Esophagus squamous epithelium (tissue), 5 donors: ENCODE measurements at regions of chr11 and their contacts with region 1.

Region 1: GRCh38 chr11:46389450-46390253 is 1.9 kb downstream of the CHRM4 start:
- DNase-seq: no peak
- H3K4me3 ChIP-seq: peak overlapping the region; percentile 17 to 69 (median 39)
- H3K27ac ChIP-seq: no peak overlapping the region
- H3K4me1 ChIP-seq: peaks cover 30 to 51% (median 39%) of the 10 kb centered on the region in 3 donors
- H3K27me3 ChIP-seq: peaks cover 22 to 84% (median 22%) of the 10 kb centered on the region in 4 donors
- CTCF ChIP-seq: peak; percentile 62 to 83 (median 74)
- POLR2A ChIP-seq: no peak

Region 2: GRCh38 chr11:46450846-46451477 is 61.3 kb after region 1 on chr11:
- intact Hi-C with region 1: no loop called
- DNase-seq: no peak
- H3K4me3 ChIP-seq: no peak overlapping the region
- H3K27ac ChIP-seq: no peak overlapping the region
- H3K4me1 ChIP-seq: peaks cover 0 to 27% (median 9%) of the 10 kb centered on the region in 3 donors
- H3K27me3 ChIP-seq: no peaks in the 10 kb centered on the region
- CTCF ChIP-seq: no peak
- POLR2A ChIP-seq: no peak

Region 3: GRCh38 chr11:46529928-46530574 is 140.4 kb after region 1 on chr11:
- intact Hi-C with region 1: loop called (anchors 5 kb)
- DNase-seq: no peak
- H3K4me3 ChIP-seq: no peak overlapping the region
- H3K27ac ChIP-seq: no peak overlapping the region
- H3K4me1 ChIP-seq: peaks cover 0 to 24% (median 0%) of the 10 kb centered on the region in 3 donors
- H3K27me3 ChIP-seq: no peaks in the 10 kb centered on the region
- CTCF ChIP-seq: no peak
- POLR2A ChIP-seq: no peak